ENCODE measurements at regions of chr2 and their contacts with region 1.

Region 1: DNA sequence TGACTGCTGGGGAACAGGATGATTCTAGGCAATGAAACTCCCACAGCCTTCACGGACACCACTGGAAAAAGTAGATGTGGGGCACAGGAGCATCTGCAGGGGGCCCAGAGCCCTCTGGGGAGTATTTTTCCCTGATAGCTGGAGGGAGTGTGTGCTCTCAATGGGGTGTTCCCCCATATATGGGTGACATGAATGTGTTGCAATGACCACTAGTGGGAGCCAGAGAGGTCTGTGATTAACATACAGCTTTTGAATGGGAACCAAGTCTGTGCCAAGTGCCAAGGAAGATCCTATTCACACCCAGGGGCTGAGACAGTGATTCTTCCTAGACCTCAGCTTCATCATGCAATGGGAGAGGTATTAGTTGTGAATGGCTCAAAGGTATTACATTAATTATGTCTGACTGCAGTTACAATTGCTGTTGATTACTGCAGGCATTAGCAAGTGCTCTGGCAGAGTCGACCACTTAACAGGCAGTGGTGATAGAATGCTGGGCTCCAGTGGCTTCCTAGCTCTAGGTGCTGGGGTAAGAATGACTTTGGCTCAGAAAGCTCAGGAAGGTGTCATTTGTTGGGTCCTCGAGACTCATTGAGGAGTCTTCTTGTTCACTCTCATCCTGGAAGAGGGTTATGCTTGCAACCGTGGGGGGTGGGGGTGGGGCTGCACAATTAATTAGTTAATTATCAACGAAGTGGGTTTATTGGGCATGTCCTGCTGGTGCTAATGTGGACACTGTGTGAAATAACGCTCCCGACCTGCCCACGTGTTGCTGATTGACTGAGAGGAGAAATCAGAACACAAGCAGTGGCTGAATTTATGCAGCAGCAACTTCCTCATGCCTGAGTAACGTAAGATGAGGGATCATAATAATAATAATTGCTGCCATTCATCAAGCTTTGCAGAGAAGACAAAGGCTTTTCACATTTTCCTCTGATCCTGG is 194.1 kb downstream of the CLIP4 start:
- DNase-seq: peak; percentile 50
- H3K4me3 Mint-ChIP-seq: no peak overlapping the region
- H3K27ac Mint-ChIP-seq: no peak overlapping the region
- H3K4me1 Mint-ChIP-seq: peaks cover 13% of the 10 kb centered on the region
- H3K27me3 Mint-ChIP-seq: peaks cover 23% of the 10 kb centered on the region

Region 2: GRCh38 chr2:29295857-29296256 is 13.5 kb before region 1 on chr2:
- CTCF ChIA-PET with region 1: interaction called, 13 read pairs
- POLR2A ChIA-PET with region 1: no interaction called
- DNase-seq: no peak
- H3K4me3 Mint-ChIP-seq: no peak overlapping the region
- H3K27ac Mint-ChIP-seq: no peak overlapping the region
- H3K4me1 Mint-ChIP-seq: no peaks in the 10 kb centered on the region
- H3K27me3 Mint-ChIP-seq: peaks cover 37% of the 10 kb centered on the region

Region 3: DNA sequence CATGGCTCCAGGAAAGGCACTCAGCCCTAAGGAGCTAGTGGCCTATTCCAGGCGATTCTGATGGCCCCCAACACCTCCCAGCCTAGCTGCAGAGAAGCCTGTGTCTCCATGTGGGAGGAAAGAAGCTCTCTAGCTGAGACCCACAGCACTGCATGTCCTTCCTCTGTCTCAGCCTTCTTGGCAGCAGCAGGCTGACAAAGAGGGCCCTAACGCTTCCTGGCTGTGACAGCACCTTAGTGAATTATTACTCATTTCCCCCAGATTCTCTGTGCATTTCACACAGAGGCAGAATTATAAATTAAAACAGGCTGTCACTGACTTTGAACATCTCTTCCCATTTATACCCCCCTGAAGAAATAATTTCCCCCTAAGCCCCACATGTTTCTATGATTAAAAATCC is 12.7 kb after region 1 on chr2:
- CTCF ChIA-PET with region 1: interaction called, 23 read pairs
- POLR2A ChIA-PET with region 1: interaction called, 3 read pairs
- DNase-seq: peak; percentile 35
- H3K4me3 Mint-ChIP-seq: no peak overlapping the region
- H3K27ac Mint-ChIP-seq: peak overlapping the region; percentile 62
- H3K4me1 Mint-ChIP-seq: peaks cover 43% of the 10 kb centered on the region
- H3K27me3 Mint-ChIP-seq: peaks cover 23% of the 10 kb centered on the region